PC-9 (cell line): ENCODE measurements at regions of chr15 and their contacts with region 1.

Region 1: GRCh38 chr15:34109797-34110663 is 8.1 kb downstream of the PGBD4 start:
- DNase-seq: peak in 1 of 2 experiments; percentile 13
- H3K4me3 ChIP-seq: no peak overlapping the region
- H3K27ac ChIP-seq: no peak overlapping the region
- H3K4me1 ChIP-seq: no peaks in the 10 kb centered on the region
- H3K27me3 ChIP-seq: no peaks in the 10 kb centered on the region
- CTCF ChIP-seq: peak; percentile 76

Region 2: GRCh38 chr15:34070003-34070402 is 40.0 kb before region 1 on chr15:
- CTCF ChIA-PET with region 1: no interaction called
- POLR2A ChIA-PET with region 1: no interaction called
- intact Hi-C with region 1: no loop called
- DNase-seq: no peak
- H3K4me3 ChIP-seq: no peak overlapping the region
- H3K27ac ChIP-seq: no peak overlapping the region
- H3K4me1 ChIP-seq: no peaks in the 10 kb centered on the region
- H3K27me3 ChIP-seq: no peaks in the 10 kb centered on the region
- CTCF ChIP-seq: no peak

Region 3: GRCh38 chr15:34147371-34148140 is 37.5 kb after region 1 on chr15:
- CTCF ChIA-PET with region 1: no interaction called
- POLR2A ChIA-PET with region 1: interaction called, 11 read pairs
- intact Hi-C with region 1: no loop called
- DNase-seq: peak in 1 of 2 experiments; percentile 43
- H3K4me3 ChIP-seq: no peak overlapping the region
- H3K27ac ChIP-seq: no peak overlapping the region
- H3K4me1 ChIP-seq: no peaks in the 10 kb centered on the region
- H3K27me3 ChIP-seq: no peaks in the 10 kb centered on the region
- CTCF ChIP-seq: no peak

Region 4: GRCh38 chr15:34318277-34319079 is 208.4 kb after region 1 on chr15:
- CTCF ChIA-PET with region 1: no interaction called
- POLR2A ChIA-PET with region 1: no interaction called
- intact Hi-C with region 1: no loop called
- DNase-seq: peak; percentile 58 to 70
- H3K4me3 ChIP-seq: peak overlapping the region; percentile 63
- H3K27ac ChIP-seq: peak overlapping the region; percentile 38
- H3K4me1 ChIP-seq: 0 out of 2 replicates have a peak, but pooled peaks cover 20% of the 10 kb centered on the region
- H3K27me3 ChIP-seq: no peaks in the 10 kb centered on the region
- CTCF ChIP-seq: no peak